Motor neuron (in vitro differentiated cells): ENCODE measurements at regions of chr6 and their contacts with region 1.

Region 1: GRCh38 chr6:44086931-44087574 is 40.2 kb downstream of the MRPL14 start:
- ATAC-seq: peak; percentile 23 to 74 (median 56)
- H3K4me3 ChIP-seq: no peak overlapping the region
- H3K27ac ChIP-seq: no peak overlapping the region
- H3K4me1 ChIP-seq: peaks cover 2 to 6% of the 10 kb centered on the region in 2 donors

Region 2: DNA sequence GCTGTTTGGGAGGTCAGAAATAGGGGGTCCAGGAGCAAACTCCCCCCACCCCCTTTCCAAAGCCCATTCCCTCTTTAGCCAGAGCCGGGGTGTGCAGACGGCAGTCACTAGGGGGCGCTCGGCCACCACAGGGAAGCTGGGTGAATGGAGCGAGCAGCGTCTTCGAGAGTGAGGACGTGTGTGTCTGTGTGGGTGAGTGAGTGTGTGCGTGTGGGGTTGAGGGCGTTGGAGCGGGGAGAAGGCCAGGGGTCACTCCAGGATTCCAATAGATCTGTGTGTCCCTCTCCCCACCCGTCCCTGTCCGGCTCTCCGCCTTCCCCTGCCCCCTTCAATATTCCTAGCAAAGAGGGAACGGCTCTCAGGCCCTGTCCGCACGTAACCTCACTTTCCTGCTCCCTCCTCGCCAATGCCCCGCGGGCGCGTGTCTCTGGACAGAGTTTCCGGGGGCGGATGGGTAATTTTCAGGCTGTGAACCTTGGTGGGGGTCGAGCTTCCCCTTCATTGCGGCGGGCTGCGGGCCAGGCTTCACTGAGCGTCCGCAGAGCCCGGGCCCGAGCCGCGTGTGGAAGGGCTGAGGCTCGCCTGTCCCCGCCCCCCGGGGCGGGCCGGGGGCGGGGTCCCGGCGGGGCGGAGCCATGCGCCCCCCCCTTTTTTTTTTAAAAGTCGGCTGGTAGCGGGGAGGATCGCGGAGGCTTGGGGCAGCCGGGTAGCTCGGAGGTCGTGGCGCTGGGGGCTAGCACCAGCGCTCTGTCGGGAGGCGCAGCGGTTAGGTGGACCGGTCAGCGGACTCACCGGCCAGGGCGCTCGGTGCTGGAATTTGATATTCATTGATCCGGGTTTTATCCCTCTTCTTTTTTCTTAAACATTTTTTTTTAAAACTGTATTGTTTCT is 317.3 kb before region 1 on chr6 and contains the start of gene VEGFA:
- in situ Hi-C with region 1: loop called in 3 of 9 experiments (anchors 10 to 25 kb)
- ATAC-seq: peak; percentile 44 to 77 (median 70)
- H3K4me3 ChIP-seq: peak within 1 kb of the TSS; percentile 56 to 97 (median 91)
- H3K27ac ChIP-seq: peak within 1 kb of the TSS; percentile 97 to 99
- H3K4me1 ChIP-seq: peaks cover 10 to 29% of the 10 kb centered on the region in 2 donors
- total RNA-seq, gene VEGFA: 19.9 to 266 (median 164) TPM

Region 3: GRCh38 chr6:44133003-44133931 is 46.2 kb after region 1 on chr6:
- in situ Hi-C with region 1: no loop called
- ATAC-seq: peak; percentile 89 to 99 (median 96)
- H3K4me3 ChIP-seq: peak overlapping the region in 1 of 5 donors; percentile 14
- H3K27ac ChIP-seq: no peak overlapping the region
- H3K4me1 ChIP-seq: peaks cover 14 to 19% of the 10 kb centered on the region in 2 donors